HEK293 (cell line): ENCODE measurements at regions of chr17 and their contacts with region 1.

Region 1: DNA sequence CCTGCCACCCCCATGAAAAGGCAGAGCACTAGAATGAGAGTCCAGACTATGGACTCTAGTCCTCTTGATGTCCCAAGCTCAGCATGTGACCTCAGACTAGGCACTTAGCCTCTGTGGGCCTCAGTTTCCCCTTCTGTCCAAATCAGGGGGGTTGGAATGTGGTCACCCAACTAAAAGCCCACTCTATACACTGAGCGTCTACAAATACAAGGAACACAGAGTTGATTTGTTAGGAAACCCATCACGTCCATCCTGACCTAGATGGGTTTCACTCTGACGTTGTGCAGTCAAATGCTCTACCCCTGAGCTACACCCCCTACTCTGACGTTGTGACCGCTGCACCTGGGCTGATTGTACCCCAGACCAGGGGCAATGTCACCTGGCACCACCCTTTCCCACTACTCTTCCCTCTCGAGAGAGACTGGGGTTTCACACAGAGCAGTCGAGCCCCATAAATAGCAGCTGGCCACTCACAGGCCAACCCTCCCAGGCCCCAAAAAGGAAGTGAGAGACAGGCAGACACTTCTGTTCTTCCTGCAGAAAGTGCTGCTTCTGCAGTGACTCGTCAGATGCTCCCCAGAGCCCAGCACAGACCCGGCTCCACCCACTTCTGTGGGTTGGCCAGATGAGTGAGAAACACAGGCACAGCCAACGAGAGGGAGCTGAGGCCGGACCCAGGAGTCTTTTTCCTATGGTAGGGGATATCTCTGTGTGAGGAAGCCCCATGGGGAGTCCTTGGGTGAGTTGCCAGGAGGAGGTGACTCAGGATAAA is 16.1 kb upstream of the TNFRSF13B start:
- H3K4me3 ChIP-seq: no peak overlapping the region
- H3K27ac ChIP-seq: no peak overlapping the region
- H3K4me1 ChIP-seq: no peaks in the 10 kb centered on the region; the same call in 1 of the 2 replicates
- CTCF ChIP-seq: no peak

Region 2: DNA sequence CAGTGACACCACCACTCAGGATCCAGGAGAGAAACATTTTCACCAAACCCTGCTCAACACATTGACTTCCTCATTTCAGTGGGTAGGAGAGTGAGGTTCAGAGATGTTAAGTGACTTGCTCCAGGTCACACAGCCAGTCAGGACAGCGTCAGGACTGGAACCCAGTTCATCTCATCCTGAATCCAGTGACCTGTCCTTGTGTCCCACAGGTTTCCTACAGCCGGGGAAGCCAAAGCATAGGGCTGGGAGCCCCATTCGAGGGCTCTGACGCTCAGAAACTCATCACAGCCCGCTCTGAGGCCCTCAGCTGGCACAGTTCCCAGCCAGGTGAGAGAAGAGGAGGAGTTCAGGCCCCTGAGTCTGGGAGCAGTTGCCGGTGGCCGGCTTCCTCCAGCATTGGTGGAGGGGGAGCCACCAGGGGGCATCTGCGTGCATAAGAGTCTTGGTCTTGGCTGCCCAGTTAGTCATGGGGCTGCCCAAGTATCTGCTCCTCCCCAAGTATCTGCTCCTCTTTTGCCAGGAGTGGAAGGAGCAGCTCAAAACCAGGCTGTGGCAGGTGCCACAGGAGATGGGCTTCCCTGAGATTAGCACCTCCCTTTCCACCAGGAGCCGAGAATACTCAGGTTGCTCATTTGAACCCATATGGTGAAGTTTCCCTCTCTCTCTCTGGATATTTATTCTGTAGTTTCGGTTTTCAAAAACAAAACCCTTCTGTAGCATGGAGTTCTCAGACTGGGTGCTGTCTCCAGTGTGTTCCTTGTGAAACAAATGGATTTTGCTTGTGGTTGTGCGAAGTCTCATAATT is 72.1 kb before region 1 on chr17:
- CTCF ChIA-PET with region 1: interaction called, 34 read pairs
- POLR2A ChIA-PET with region 1: no interaction called
- H3K4me3 ChIP-seq: no peak overlapping the region
- H3K27ac ChIP-seq: no peak overlapping the region
- H3K4me1 ChIP-seq: no peaks in the 10 kb centered on the region; the same call in 1 of the 2 replicates
- CTCF ChIP-seq: peak; percentile 43; the same call in 1 of the 2 replicates

Region 3: DNA sequence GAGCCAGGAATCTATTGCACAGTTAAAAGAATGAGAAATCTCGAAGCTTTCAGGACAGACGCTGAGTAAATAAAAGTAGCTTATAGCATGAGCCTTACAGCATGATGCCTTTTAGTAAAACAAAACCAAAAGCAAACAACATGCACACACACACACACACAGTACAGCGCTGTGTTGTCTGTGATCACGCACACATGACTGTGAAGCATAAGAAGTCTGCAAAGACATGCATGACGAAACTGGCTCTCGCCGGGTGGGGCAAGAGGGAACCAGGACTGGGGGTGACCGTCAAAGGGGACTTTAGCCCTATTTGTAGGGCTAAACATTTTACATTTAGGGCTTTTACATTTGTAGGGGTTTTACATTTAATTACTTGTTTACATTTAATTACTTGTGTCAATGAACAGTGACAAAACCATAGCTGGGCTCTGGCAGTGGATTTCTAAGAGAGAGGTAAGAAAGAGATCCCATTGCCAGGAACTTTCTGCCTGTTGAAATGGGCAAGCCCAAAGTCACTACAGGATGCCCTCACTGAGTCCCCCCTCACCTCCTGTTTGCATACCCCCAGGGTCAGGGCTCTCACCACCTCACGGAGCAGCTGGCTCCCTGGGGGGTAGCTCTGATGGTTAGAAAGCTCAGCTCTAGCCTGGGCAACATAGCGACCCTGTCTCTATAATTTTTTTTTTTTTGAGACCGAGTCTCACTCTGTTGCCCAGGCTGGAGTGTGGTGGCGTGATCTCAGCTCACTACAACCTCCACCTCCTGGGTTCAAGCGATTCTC is 14.1 kb before region 1 on chr17:
- CTCF ChIA-PET with region 1: interaction called, 50 read pairs
- POLR2A ChIA-PET with region 1: interaction called, 4 read pairs
- H3K4me3 ChIP-seq: no peak overlapping the region
- H3K27ac ChIP-seq: no peak overlapping the region
- H3K4me1 ChIP-seq: no peaks in the 10 kb centered on the region
- CTCF ChIP-seq: no peak

Region 4: DNA sequence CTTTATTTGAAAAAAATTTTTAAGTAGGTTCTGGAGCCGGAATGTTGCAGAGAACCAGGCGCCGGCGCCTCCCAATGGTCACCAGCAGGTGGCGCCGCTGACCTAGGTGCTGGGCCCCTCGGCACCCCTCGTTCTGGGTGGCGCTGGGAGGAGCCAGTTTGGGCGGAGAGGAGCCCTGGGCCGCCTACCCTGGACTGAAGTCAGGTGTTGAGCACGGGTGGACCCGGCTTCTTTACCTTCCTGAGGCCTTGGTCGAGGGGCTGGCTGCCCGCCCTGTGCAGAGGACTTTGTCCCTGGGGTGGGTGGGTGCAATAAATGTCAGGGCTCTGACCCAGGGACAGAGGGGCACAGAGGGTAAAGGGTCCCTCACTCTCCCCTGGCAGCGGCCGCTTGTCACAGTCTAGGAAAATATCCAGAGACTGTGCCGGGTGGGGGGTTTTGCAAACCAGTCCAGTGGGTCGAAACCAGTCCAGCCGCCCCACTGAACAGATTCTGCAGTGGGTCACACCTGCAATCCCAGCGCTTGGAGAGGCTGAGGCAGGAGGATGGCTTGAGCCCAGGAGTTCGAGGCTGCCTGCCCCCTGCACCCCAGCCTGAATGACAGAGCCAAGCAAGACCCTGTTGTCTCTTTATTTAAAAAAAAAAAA is 14.0 kb after region 1 on chr17:
- CTCF ChIA-PET with region 1: interaction called, 16 read pairs
- POLR2A ChIA-PET with region 1: no interaction called
- H3K4me3 ChIP-seq: no peak overlapping the region
- H3K27ac ChIP-seq: no peak overlapping the region
- H3K4me1 ChIP-seq: no peaks in the 10 kb centered on the region; the same call in 1 of the 2 replicates
- CTCF ChIP-seq: peak; percentile 86

Region 5: DNA sequence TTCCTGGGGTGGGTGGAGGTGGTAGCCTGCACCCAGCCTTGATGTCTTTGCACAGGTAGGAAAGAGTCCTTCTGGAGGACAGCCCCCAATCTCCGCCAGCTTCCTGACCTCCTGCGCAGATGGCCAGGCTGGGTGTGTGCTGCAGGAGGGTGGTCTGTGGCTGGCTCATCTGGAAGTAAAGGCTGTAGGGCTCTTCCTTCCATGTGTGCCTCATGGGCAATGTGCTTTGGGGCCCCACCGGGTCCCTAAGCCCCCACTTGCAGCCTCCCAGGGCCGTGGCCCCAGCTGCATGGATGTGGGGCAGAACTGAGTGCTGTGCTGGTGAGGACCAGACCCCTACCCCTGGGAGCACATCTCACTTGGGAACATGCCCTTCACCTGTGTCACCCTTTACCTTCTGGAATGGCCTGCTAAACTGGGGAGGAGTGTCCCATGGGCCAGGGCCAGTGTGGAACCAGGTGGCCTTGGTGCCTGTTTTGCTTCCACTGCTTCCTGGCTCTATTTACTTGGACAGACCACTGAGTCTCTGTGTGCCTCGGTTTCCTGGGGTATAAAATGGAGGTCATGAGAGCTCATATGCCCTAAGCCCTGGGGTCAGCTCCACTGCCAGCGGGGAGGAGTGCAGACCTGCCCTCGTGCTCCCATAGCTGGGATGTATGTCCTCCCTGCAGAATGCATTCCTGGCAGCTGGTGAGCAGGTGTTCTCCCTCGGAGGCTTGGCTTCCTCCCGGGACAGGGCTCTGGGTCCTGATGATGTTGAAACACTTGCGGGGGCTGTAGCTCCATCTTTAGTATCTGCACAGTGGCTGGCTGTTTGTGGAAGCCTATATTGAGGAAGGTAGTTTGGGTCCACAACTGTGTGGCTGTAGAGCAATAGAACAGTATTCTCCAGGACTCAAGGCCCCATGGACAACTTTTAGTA is 72.2 kb after region 1 on chr17:
- CTCF ChIA-PET with region 1: no interaction called
- POLR2A ChIA-PET with region 1: no interaction called
- H3K4me3 ChIP-seq: no peak overlapping the region
- H3K27ac ChIP-seq: no peak overlapping the region
- H3K4me1 ChIP-seq: peaks cover 4% of the 10 kb centered on the region; the same call in 1 of the 2 replicates
- CTCF ChIP-seq: no peak

Region 6: GRCh38 chr17:17171991-17172939 is 184.2 kb after region 1 on chr17:
- CTCF ChIA-PET with region 1: no interaction called
- POLR2A ChIA-PET with region 1: no interaction called
- H3K4me3 ChIP-seq: no peak overlapping the region
- H3K27ac ChIP-seq: no peak overlapping the region
- H3K4me1 ChIP-seq: no peaks in the 10 kb centered on the region
- CTCF ChIP-seq: no peak